Lower leg skin (tissue), 4 donors: ENCODE measurements at regions of chr6 and their contacts with region 1.

Region 1: GRCh38 chr6:122530440-122531046 is 58.9 kb upstream of the SERINC1 start:
- DNase-seq: peak in 1 of 2 donors; percentile 67
- H3K4me3 ChIP-seq: no peak overlapping the region
- CTCF ChIP-seq: peak in 1 of 3 donors; percentile 14
- POLR2A ChIP-seq: no peak

Region 2: DNA sequence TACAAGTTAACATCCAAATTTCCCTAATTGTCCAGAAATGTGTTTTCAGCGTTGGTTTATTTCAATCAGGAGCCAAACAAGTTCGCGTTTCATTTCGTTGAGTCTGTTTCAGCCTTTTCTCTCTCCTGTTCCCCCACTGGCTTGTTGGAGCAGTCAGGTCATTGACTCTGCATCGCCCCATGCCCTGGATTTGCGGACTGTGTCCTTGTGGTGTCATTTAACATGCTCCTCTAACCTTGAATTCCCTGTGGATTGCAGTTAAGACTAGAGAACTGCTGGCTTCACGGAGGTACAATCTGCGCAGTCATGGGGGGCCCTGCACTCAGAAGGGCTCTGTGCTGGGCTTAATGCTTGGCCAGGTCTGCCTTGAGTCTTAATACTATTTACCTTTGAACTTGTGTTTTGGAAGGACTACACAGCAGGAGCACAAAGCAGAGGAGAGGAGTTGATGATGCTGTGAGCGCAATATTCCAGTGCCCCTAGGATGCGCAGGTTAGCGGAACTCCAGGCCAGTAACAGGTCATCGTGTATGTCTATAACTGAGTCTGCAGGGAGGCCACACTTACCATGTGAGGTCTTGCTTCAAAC is 1190.8 kb before region 1 on chr6:
- intact Hi-C with region 1: loop called (anchors 10 kb)
- DNase-seq: peak in 1 of 2 donors; percentile 52
- H3K4me3 ChIP-seq: no peak overlapping the region
- CTCF ChIP-seq: no peak
- POLR2A ChIP-seq: no peak

Region 3: DNA sequence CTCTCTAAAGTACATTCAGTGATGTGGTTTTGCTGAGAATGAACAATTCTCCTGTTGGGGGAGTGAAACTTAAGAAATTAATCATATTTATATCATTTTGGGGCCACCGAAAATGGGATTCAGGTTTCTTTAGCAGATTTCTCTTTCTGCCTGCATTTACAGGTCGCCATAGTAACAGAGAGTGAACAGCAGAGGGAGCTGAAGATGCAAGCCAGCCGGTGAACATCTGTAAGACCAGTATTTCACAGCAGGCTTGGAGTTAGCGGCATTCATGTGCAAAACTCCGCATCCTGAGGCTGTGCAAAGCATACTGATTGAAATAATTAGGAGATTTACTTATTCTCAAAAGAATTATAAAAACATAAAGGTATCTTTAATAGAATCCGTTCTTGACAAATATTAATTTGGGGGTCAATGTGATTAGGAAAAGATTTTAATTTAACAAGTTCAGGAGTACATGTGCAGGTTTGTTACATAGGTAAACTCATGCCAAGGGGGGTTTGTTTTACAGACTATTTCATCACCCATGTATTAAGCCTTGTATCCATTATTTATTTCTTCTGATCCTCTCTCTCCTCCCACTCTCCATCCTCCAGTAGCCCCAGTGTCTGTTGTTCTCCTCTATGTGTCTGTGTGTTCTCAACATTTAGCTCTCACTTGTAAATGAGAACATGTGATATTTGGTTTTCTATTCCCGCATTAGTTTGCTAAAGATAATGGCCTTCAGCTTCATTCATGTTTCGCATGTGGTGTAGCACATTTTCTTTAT is 148.9 kb before region 1 on chr6:
- intact Hi-C with region 1: loop called (anchors 10 kb)
- DNase-seq: peak in 1 of 2 donors; percentile 46
- H3K4me3 ChIP-seq: no peak overlapping the region
- CTCF ChIP-seq: no peak
- POLR2A ChIP-seq: no peak